Calu3 (cell line): ENCODE measurements at regions of chr12 and their contacts with region 1.

Region 1: DNA sequence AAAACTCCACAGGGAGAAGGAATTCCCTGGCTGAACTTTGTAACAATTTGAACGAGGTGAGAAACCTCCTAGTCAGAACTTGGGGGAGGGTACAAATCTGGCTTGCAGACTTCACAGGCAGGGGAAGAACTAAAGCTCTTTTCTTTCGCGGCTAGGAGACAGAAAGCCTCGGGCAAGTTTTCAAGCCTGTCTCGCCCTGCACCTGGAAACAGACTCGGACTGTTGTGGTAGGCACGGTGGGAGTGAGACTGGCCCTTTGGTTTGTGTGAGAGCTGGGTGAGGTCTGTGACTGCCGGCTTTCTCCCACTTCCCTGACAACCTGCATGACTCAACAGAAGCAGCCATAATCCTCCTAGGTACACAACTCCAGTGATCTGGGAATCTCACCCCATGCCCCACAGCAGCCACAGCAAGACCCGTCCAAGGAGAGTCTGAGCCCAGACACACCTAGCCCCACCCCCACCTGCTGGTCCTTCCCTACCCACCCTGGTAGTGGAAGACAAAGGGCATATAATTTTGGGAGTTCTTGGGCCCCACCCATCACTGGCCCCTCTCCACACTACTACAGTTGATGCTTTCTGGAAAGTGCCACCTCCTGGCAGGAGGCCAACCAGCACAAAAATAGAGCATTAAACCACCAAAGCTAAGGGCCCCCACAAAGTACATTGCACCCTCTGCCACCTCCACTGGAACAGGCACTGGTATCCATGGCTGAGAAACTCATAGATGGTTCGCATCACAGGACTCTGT is 102.7 kb upstream of the ST8SIA1 start:
- DNase-seq: peak; percentile 55
- H3K4me3 Mint-ChIP-seq: peak overlapping the region; percentile 65
- H3K27ac Mint-ChIP-seq: peak overlapping the region; percentile 86
- H3K4me1 Mint-ChIP-seq: peaks cover 22% of the 10 kb centered on the region
- H3K27me3 Mint-ChIP-seq: no peaks in the 10 kb centered on the region
- CTCF ChIP-seq: no peak

Region 2: DNA sequence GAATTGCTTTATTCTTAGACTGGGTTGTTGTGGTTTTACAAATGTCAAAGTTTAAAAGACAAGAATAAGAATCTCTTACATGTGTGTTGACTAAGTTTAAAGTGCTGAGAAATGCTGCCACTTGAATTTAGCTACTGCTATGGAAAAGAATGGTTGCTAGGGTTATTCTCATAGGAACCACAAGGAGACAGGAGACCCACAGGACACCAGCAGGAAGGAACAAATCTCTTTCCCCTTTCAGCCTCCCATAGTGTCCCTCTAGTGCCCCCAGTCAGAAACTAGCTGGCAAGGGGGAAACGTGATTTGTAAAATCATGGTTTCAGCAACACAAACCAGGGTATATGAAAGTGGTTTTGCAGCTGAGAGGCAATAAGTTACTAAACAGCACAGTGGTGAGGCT is 205.4 kb before region 1 on chr12:
- CTCF ChIA-PET with region 1: no interaction called
- intact Hi-C with region 1: loop called (anchors 10 kb)
- DNase-seq: no peak
- H3K4me3 Mint-ChIP-seq: no peak overlapping the region
- H3K27ac Mint-ChIP-seq: no peak overlapping the region
- H3K4me1 Mint-ChIP-seq: no peaks in the 10 kb centered on the region
- H3K27me3 Mint-ChIP-seq: no peaks in the 10 kb centered on the region
- CTCF ChIP-seq: no peak

Region 3: DNA sequence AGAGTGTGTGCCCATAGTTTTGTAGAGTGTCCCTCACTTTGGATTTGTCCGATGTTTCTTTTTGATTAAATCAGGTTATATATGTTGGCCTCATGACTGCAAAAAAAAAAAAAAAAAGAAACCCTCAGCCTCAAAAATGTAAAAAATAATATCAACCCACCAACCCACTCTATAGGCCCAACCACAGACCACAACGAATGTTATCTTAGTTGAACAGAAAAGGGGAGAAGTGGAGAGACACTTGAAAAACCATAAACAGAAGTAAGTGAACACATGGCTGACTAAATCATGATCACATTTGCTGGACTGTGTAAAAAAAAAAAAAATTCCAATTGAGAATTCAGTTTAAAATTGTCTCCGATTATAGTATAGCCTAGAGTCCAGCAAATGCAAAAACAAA is 57.2 kb before region 1 on chr12:
- CTCF ChIA-PET with region 1: no interaction called
- intact Hi-C with region 1: no loop called
- DNase-seq: no peak
- H3K4me3 Mint-ChIP-seq: no peak overlapping the region
- H3K27ac Mint-ChIP-seq: no peak overlapping the region
- H3K4me1 Mint-ChIP-seq: no peaks in the 10 kb centered on the region
- H3K27me3 Mint-ChIP-seq: no peaks in the 10 kb centered on the region
- CTCF ChIP-seq: no peak